ENCODE measurements at regions of chr20 and their contacts with region 1.

Region 1: GRCh38 chr20:51531141-51531710 is 11.3 kb downstream of the NFATC2 start:
- DNase-seq: peak; percentile 68 to 85
- ATAC-seq: peak; percentile 64 to 69 (median 66)
- H3K4me3 ChIP-seq: no peak overlapping the region
- H3K4me3 Mint-ChIP-seq: peak overlapping the region; percentile 87
- H3K27ac ChIP-seq: peak overlapping the region; percentile 83
- H3K27ac Mint-ChIP-seq: peak overlapping the region; percentile 95 to 100
- H3K4me1 ChIP-seq: peaks cover 95% of the 10 kb centered on the region
- H3K4me1 Mint-ChIP-seq: peaks cover 94 to 100% of the 10 kb centered on the region in 2 donors
- H3K27me3 ChIP-seq: no peaks in the 10 kb centered on the region
- H3K27me3 Mint-ChIP-seq: no peaks in the 10 kb centered on the region
- CTCF ChIP-seq: no peak

Region 2: DNA sequence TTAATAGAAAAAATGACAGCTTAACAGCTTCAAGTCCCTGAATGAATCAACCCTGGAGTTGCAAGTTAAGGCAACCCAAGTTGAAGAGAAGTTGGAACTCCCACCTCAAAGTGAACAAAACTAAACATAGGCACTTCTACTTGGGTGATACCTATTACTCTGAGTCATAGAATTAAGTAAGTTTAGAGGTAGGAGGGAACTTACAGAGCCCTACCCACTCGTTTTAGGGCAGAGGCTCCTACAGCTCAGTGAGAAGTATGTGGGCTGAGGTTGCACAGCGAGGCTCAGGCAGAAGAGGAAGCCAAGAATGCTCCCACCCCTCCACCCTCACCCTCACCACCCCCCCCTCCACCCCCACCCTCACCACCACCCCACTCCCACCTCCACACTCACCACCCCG is 30.9 kb before region 1 on chr20:
- intact Hi-C with region 1: loop called (anchors 2 kb)
- DNase-seq: peak; percentile 49 to 86
- ATAC-seq: peak; percentile 79 to 90 (median 83)
- H3K4me3 ChIP-seq: no peak overlapping the region
- H3K4me3 Mint-ChIP-seq: peak overlapping the region; percentile 88
- H3K27ac ChIP-seq: peak overlapping the region; percentile 87
- H3K27ac Mint-ChIP-seq: peak overlapping the region; percentile 95 to 99
- H3K4me1 ChIP-seq: peaks cover 82% of the 10 kb centered on the region
- H3K4me1 Mint-ChIP-seq: peaks cover 92 to 93% of the 10 kb centered on the region in 2 donors
- H3K27me3 ChIP-seq: no peaks in the 10 kb centered on the region
- H3K27me3 Mint-ChIP-seq: no peaks in the 10 kb centered on the region
- CTCF ChIP-seq: no peak

Region 3: DNA sequence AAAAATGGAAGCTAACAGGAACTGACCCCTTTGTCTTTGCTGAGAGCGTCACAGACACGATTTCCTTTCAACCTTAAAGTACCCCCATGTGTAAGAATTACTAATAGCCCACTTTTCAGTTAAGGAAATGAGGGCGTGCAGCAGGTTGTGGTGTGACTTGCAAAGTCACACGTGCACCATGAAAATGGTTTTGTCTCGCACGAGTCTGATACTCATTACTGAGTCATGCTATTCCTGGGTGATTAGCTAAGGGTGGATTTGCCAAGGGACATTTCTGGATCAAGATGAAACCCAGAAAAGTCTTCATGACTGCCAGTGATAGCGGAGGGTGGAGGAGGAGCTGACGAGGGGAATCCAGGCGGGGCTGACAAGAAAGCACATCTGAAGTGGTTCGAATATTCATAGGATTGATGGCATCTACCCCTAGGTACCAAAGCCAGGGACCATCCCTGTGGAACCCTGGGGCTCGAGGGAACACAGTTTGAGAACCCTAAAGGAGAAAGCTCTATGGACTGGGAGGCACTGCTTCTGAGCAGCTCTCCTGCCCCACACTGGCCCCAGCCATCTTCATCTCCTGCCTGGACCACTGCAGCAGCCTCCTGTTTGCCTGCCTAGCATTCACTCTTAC is 23.4 kb after region 1 on chr20:
- intact Hi-C with region 1: loop called (anchors 1 kb)
- DNase-seq: peak; percentile 35 to 66
- ATAC-seq: peak; percentile 87 to 91 (median 90)
- H3K4me3 ChIP-seq: no peak overlapping the region
- H3K4me3 Mint-ChIP-seq: peak overlapping the region; percentile 11
- H3K27ac ChIP-seq: no peak overlapping the region
- H3K27ac Mint-ChIP-seq: peak overlapping the region; percentile 24 to 59
- H3K4me1 ChIP-seq: peaks cover 18% of the 10 kb centered on the region
- H3K4me1 Mint-ChIP-seq: peaks cover 24 to 27% of the 10 kb centered on the region in 2 donors
- H3K27me3 ChIP-seq: peaks cover 10% of the 10 kb centered on the region
- H3K27me3 Mint-ChIP-seq: peaks cover 3 to 10% of the 10 kb centered on the region in 2 donors
- CTCF ChIP-seq: no peak

Region 4: DNA sequence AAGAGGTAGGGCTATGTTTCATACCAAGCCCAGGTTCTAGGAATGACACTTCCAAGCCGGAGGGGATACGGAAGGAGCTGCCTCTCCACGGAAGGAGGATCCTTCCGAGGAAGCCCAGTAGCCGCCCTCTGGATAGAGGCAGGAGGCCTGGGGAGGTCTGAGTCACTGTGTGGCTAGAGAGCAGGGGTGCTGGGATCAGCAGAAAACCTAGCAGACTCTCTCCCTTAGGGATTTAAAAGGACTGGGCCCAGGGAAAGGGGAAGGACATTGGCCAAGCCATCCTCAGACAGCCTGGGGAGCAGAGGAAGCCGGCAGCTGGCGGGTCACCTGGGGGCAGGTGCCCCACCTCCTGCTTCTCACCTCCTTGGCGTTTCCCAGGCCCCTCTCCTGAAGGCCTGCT is 47.9 kb after region 1 on chr20:
- intact Hi-C with region 1: no loop called
- DNase-seq: no peak
- ATAC-seq: no peak
- H3K4me3 ChIP-seq: no peak overlapping the region
- H3K4me3 Mint-ChIP-seq: no peak overlapping the region
- H3K27ac ChIP-seq: no peak overlapping the region
- H3K27ac Mint-ChIP-seq: no peak overlapping the region
- H3K4me1 ChIP-seq: no peaks in the 10 kb centered on the region
- H3K4me1 Mint-ChIP-seq: no peaks in the 10 kb centered on the region
- H3K27me3 ChIP-seq: no peaks in the 10 kb centered on the region
- H3K27me3 Mint-ChIP-seq: peaks cover 0 to 5% of the 10 kb centered on the region in 2 donors
- CTCF ChIP-seq: no peak

Measured in natural killer cell (primary cell).